ENCODE measurements at regions of chr11 and their contacts with region 1.

Region 1: DNA sequence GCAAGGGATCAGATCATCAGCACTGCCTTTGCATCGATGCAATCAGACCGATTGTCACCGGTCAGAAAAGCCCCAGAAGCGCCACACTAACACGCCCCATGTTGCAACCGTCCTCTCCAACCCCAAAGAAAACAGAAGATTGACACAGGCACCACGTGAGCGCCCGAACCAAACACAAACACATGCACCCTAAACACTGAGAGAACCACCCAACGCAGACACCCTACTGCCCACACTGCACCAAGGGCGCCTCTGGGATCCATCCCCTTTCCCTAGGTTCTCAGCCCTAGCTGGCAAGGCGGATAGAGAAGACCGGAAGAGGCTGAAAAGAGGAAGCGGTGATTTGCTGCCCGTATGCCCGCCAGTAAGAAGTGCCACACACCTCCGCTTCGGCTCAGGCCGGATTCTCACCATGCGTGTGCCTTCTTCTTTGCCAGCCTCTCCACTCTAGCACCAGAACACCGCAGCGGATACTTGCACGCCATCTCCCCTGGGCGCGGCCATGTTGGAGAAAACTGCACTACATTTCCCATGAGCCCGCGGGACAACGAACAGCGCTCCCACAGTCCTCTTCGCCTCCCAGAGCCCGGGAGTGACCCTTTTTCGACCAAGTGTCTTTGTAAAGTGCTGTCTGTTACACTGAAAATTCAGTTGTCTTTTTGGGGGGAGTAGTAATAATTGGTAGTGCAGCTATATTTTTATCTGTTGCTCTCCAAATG is at the start of gene ALKBH8:
- DNase-seq: peak; percentile 87
- H3K4me3 Mint-ChIP-seq: peak within 1 kb of the TSS; percentile 93
- H3K27ac Mint-ChIP-seq: peak within 1 kb of the TSS; percentile 92
- H3K4me1 Mint-ChIP-seq: peaks cover 44% of the 10 kb centered on the region
- H3K27me3 Mint-ChIP-seq: no peaks in the 10 kb centered on the region

Region 2: DNA sequence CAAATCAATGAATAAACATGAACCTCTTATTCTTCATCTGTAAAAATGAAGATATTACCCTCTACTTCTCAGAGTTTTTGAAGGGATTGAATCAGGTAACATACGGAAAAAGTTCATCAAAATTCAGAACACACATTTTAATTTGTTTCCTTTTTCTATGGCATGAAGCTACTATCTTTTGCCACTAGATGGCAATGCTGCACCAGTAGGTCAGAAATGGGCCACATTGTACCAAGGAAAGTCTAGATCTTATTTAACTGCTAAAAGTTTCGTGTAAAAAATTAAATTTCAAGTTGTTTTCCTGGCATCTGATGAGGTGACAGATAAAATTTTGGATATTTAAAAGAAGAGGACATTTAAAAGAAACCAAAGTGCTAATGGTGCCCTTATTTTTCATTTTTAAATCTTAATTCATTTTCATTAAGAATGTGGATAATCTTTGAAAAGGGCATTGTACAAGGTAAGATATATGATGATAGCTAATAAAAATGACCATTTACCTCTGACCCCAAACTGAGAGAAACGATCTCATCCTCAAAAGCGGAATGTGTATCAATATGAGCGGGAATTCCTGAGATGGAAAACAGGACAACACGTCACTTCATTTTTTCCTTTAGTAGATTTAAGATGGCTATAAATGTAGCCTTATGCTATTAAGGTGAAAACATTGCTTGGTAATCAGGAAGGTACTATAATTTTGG is 16.0 kb before region 1 on chr11:
- CTCF ChIA-PET with region 1: interaction called, 49 read pairs
- DNase-seq: peak; percentile 40
- H3K4me3 Mint-ChIP-seq: no peak overlapping the region
- H3K27ac Mint-ChIP-seq: no peak overlapping the region
- H3K4me1 Mint-ChIP-seq: no peaks in the 10 kb centered on the region
- H3K27me3 Mint-ChIP-seq: no peaks in the 10 kb centered on the region

Region 3: DNA sequence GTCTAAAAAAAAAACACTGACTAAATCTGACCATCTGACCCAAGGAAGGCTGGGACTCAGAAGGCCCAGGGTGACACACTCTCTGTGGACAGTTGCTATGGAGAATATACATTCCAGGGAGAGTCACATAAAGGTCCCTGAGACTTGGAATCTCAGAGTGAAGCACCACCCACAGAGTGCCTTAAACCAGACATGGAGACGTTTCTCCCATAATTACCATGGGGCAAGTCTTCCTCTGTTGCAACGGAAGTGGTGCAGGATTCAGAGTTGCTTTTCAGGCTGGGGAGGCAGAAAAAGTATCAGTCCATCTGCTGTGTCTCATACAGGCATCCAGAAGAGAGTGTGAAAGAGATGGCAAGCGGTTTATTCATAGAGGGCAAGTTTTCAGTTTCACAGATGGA is 205.2 kb after region 1 on chr11:
- CTCF ChIA-PET with region 1: interaction called, 10 read pairs
- DNase-seq: no peak
- H3K4me3 Mint-ChIP-seq: no peak overlapping the region
- H3K27ac Mint-ChIP-seq: no peak overlapping the region
- H3K4me1 Mint-ChIP-seq: peaks cover 3% of the 10 kb centered on the region
- H3K27me3 Mint-ChIP-seq: peaks cover 6% of the 10 kb centered on the region

Measured in activated naive CD4-positive, alpha-beta T cell treated with anti-CD3 and anti-CD28 coated beads, Interleukin-2, amount 10 ng/mL, durations not matched to agents 7 days and 5 days (primary cell).